PC-3 (cell line): ENCODE measurements at regions of chr6 and their contacts with region 1.

Region 1: GRCh38 chr6:28266962-28267694 is at the start of gene ZSCAN26:
- DNase-seq: peak; percentile 93
- ATAC-seq: peak; percentile 91
- H3K4me3 ChIP-seq: peak within 1 kb of the TSS; percentile 86
- H3K27ac ChIP-seq: peak within 1 kb of the TSS; percentile 48
- H3K4me1 ChIP-seq: peaks cover 28% of the 10 kb centered on the region
- H3K27me3 ChIP-seq: no peaks in the 10 kb centered on the region
- CTCF ChIP-seq: no peak
- total RNA-seq, gene ZSCAN26: 10.8 and 12.3 TPM in 2 replicates

Region 2: DNA sequence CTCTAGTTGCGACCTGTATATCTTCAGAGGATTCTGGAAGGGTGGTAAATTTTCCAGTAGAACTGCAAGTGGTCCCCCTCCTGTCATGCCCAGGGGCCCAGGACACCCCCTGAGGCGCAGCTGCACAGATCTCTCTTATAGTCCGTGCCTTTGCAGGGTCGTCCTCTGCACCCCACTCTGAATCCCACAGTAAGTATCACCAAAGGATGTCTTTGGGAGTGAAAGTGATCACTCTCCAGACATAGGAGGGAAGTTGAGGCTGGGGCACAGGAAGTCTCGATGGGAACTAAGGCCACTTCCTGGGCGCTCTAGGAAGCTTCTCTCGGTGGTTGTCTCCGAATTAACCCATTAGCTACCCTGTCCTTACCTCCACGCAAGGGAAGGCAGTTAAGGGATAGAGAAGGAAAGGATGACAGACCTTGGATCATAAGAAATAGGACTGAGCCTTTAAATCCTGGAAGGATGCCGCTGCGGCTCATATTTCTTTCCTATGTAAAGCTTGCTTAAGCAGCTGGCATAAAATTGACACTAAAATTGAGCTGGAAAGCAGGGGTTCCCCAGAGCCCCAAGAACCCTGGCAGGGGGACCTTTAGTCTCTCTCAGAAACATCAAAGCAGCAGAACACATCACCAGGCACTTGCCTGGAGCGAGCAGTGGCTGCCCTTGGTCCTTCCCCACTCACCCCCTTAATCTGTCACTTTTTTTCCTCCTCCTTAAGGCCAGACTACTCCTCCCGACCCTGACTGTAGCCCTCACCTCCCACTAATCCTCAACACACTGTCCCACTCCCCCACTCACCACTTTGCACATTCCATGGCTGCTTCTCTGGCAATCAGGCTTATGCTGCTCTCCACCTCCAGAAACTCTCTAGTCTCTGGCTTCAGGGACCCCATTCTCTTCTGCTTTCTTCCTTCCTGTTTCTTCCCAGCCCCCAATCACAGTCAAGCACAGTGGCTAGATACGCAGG is 14.8 kb before region 1 on chr6 and contains the start of gene ZKSCAN4:
- CTCF ChIA-PET with region 1: no interaction called
- POLR2A ChIA-PET with region 1: interaction called, 4 read pairs
- intact Hi-C with region 1: loop called (anchors 1 kb)
- DNase-seq: peak; percentile 93
- ATAC-seq: peak; percentile 89
- H3K4me3 ChIP-seq: peak within 1 kb of the TSS; percentile 93
- H3K27ac ChIP-seq: 0 out of 2 replicates have a peak within 1 kb of the TSS, but pooled peaks have one; percentile 4
- H3K4me1 ChIP-seq: peaks cover 12% of the 10 kb centered on the region
- H3K27me3 ChIP-seq: no peaks in the 10 kb centered on the region
- CTCF ChIP-seq: no peak
- total RNA-seq, gene ZKSCAN4: 2.3 and 3.7 TPM in 2 replicates

Region 3: DNA sequence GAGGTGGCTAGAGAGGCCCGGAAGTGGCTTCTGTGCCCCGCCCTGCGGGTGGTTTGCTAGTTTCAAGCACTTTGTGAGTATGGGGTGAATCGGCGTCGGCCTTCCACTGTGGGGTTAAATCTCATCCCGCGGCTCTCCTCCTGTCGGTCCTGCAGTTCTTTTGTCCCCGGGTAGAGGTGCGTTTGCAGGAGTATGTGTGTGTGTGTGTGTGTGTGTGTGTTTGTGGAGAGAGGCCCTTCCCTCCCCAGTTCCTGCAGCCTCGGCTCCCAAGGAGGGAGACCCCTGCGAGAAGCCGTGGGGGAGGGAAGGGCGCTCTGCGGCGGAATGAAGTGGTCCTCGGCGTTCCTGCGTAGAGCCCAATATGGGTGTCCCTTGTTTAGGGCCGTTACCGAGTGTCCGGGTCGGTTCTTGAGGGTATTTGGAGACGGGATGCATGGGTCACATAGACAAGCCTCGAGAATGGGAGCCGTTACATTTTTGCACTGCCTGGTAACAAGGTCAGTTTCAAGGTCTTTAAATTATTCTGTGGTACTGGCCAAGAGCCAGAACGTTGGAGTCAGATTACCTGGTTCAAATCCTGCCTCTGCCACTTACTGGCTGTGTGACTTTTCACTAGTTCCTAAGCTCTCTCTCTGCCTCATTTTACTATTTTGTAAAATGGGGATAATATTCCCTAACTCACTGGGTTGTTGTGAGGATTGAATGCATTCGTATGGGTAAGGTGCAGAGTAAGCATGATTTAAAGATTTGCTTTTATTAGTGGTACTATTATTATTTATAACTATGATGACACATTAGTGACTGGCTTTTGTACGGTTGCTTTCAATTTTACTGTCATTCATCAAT is 83.0 kb after region 1 on chr6 and contains the start of gene ZKSCAN3:
- CTCF ChIA-PET with region 1: no interaction called
- POLR2A ChIA-PET with region 1: no interaction called
- intact Hi-C with region 1: loop called (anchors 2 kb)
- DNase-seq: peak; percentile 82
- ATAC-seq: peak; percentile 75
- H3K4me3 ChIP-seq: peak within 1 kb of the TSS; percentile 84
- H3K27ac ChIP-seq: peak within 1 kb of the TSS; percentile 49
- H3K4me1 ChIP-seq: peaks cover 33% of the 10 kb centered on the region
- H3K27me3 ChIP-seq: no peaks in the 10 kb centered on the region
- CTCF ChIP-seq: no peak
- total RNA-seq, gene ZKSCAN3: 1.9 and 2.3 TPM in 2 replicates